Endothelial cell of umbilical vein (primary cell): ENCODE measurements at regions of chr22 and their contacts with region 1.

Region 1: DNA sequence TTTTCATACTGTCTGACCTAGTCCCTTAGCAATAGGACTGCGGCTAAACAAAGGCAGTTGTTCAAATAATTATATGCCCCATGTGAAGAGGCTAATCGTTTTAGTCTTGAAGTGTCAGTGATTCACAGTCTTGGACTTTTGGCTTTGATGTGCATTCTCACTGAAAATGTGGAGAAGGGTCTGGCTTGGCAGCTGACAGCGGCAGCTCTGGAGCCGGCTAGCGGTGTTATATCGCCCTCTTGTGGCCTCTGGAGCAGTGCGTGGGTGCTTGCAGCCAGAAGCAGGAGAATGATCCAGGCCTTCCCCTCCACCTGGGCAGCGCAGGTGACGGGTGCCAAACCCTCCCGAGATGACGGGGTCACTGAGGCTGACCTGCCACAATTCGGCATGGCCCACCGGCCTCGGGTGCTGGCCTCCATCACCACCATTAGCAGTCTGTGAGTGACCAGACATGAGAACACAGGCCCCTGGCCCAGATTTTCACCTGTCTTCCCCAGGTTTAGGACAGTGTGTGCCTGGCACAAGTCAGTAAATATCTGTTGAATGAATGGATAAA is 90.3 kb upstream of the PITPNB start:
- DNase-seq: peak; percentile 75
- H3K4me3 ChIP-seq: no peak overlapping the region
- H3K27ac ChIP-seq: no peak overlapping the region
- H3K4me1 ChIP-seq: no peaks in the 10 kb centered on the region
- H3K27me3 ChIP-seq: no peaks in the 10 kb centered on the region
- CTCF ChIP-seq: peak; percentile 95 to 99
- POLR2A ChIP-seq: no peak

Region 2: GRCh38 chr22:26756675-26757293 is 1252.6 kb before region 1 on chr22:
- CTCF ChIA-PET with region 1: interaction called, 3 read pairs
- POLR2A ChIA-PET with region 1: no interaction called
- dilution Hi-C with region 1: no loop called
- intact Hi-C with region 1: loop called (anchors 2 kb)
- DNase-seq: peak; percentile 46
- H3K4me3 ChIP-seq: peak overlapping the region in 2 of 3 experiments; percentile 13 to 29
- H3K27ac ChIP-seq: no peak overlapping the region
- H3K4me1 ChIP-seq: peaks cover 5% of the 10 kb centered on the region
- H3K27me3 ChIP-seq: no peaks in the 10 kb centered on the region
- CTCF ChIP-seq: peak; percentile 75 to 88
- POLR2A ChIP-seq: no peak

Region 3: GRCh38 chr22:27405672-27406388 is 603.5 kb before region 1 on chr22:
- CTCF ChIA-PET with region 1: no interaction called
- POLR2A ChIA-PET with region 1: no interaction called
- dilution Hi-C with region 1: no loop called
- intact Hi-C with region 1: loop called (anchors 10 kb)
- DNase-seq: peak; percentile 43
- H3K4me3 ChIP-seq: no peak overlapping the region
- H3K27ac ChIP-seq: no peak overlapping the region
- H3K4me1 ChIP-seq: no peaks in the 10 kb centered on the region
- H3K27me3 ChIP-seq: peaks cover 0 to under 1% of the 10 kb centered on the region in 2 experiments
- CTCF ChIP-seq: peak; percentile 81 to 85
- POLR2A ChIP-seq: no peak

Region 4: DNA sequence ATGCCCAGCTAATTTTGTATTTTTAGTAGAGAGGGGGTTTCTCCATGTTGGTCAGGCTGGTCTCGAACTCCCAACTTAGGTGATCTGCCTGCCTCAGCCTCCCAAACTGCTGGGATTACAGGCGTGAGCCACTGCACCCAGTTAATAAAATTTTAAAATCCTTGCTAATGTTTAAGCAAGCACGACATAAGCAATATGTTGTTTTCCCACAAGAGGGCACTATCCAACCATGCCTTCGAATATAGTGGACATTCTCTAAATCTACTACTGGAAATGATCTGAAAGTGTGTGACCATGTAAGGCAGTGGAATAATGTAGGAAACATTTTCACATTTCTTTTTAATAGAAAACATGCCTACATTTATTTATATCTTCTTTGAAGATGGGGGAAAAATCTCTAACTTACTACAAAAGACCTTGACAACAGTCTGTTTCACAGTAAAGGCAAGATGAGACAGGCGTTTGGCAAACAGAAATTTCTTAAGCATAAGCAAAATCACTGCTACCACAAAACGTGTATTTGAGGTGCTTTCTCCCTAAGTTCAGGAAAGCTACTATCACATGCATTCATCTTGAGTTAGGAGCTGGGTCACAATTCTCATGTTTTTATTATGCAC is 128.5 kb before region 1 on chr22:
- CTCF ChIA-PET with region 1: interaction called, 68 read pairs
- POLR2A ChIA-PET with region 1: no interaction called
- dilution Hi-C with region 1: no loop called
- intact Hi-C with region 1: loop called (anchors 1 kb)
- DNase-seq: peak; percentile 85
- H3K4me3 ChIP-seq: no peak overlapping the region
- H3K27ac ChIP-seq: peak overlapping the region; percentile 22
- H3K4me1 ChIP-seq: peaks cover 15% of the 10 kb centered on the region
- H3K27me3 ChIP-seq: no peaks in the 10 kb centered on the region
- CTCF ChIP-seq: peak; percentile 52 to 54
- POLR2A ChIP-seq: no peak

Region 5: DNA sequence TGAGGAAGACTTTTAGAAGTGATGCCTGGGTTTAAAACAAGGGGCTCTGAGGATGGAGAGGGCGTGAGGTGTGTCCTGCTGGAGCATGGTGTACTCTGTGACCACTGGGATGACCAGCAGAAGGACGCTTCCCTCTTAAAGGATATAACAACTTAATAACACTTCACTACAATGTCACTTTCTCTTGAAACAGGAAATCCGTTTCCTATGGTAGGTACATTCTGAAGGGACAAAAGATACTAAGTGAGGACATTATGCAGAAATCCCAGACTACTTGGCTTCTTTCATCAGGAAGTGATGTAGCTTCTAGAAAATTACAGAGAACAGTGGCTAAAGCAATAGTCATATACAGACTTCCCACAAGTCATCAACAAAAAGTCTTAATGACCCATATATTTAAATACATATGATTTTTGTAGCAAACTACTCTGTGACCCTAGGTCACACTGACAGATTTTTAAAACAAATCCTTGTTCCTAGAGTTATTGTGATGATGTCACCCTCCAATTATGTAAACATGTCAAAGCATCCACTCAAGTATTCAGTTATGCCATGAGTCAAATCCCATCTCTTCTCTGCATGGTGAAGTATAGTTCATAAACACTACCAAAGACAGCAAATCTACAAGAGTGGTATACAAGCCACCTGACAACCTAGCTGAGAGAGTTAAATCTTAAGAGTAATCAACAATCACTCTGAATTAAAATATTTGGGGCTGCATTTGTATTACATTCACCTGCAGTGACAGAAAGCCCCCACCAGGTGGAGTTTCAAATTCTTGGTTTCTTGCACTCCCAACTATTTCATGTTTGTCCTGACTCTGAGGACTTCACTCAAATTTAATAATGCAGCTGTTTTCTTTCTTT is 123.1 kb before region 1 on chr22:
- CTCF ChIA-PET with region 1: interaction called, 68 read pairs
- POLR2A ChIA-PET with region 1: no interaction called
- dilution Hi-C with region 1: no loop called
- intact Hi-C with region 1: loop called (anchors 1 kb)
- DNase-seq: peak; percentile 85
- H3K4me3 ChIP-seq: peak overlapping the region in 1 of 3 experiments; percentile 1
- H3K27ac ChIP-seq: peak overlapping the region; percentile 81
- H3K4me1 ChIP-seq: peaks cover 50% of the 10 kb centered on the region
- H3K27me3 ChIP-seq: no peaks in the 10 kb centered on the region
- CTCF ChIP-seq: peak; percentile 63 to 65
- POLR2A ChIP-seq: no peak

Region 6: GRCh38 chr22:27919222-27919941 is 90.0 kb before region 1 on chr22 and contains the start of gene PITPNB:
- CTCF ChIA-PET with region 1: interaction called, 10 read pairs
- POLR2A ChIA-PET with region 1: no interaction called
- dilution Hi-C with region 1: no loop called
- intact Hi-C with region 1: loop called (anchors 1 kb)
- DNase-seq: peak; percentile 99
- H3K4me3 ChIP-seq: peak within 1 kb of the TSS; percentile 77 to 100 (median 88)
- H3K27ac ChIP-seq: peak within 1 kb of the TSS; percentile 98
- H3K4me1 ChIP-seq: peaks cover 41% of the 10 kb centered on the region
- H3K27me3 ChIP-seq: no peaks in the 10 kb centered on the region
- CTCF ChIP-seq: no peak
- POLR2A ChIP-seq: peak; percentile 88
- total RNA-seq, gene PITPNB: 108 and 109 TPM in 2 replicates

Region 7: DNA sequence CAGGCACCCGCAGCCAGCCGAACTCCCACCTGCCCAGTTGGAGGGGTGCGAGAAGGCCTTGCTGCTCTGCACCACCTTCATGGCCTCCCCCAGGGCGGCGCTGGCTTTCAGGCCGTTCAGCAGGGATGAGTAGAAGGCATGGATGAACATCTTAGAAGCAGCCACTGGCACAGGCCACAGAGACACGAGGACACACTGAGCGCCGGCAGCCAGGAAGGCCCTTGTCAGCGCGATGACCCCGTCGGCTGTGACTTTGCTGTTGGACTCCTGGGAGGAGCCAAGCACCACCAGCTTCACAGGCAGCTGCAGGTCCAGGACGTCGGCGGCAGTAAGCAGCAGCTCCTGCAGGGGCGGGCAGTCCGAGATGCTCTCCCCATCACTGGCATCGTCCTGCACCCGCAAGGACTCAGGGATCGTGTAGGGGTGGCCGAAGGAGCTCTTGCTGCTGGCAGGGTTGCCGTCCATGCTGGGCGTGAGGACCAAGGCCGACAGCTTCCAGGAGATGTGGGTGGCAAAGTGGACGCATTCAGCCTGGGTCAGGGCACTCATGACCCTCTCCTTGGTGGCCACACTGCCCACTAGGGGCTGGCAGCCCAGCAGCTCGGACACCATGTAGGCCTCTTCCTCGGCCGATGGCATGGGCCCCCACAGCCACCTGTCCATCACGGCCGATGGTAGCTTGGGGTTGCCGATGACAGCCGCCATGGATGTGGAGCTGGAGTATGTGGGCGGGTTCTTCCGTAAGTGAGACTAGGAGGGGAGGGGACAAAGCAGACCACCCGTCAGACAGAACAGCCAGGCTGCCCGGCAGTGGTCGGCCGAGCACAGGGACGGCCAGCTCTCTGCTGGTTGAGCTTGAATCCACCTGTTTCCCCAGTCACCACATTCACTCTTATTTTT is 10.6 kb before region 1 on chr22:
- CTCF ChIA-PET with region 1: interaction called, 11 read pairs
- POLR2A ChIA-PET with region 1: no interaction called
- dilution Hi-C with region 1: no loop called
- intact Hi-C with region 1: no loop called
- DNase-seq: no peak
- H3K4me3 ChIP-seq: no peak overlapping the region
- H3K27ac ChIP-seq: no peak overlapping the region
- H3K4me1 ChIP-seq: no peaks in the 10 kb centered on the region
- H3K27me3 ChIP-seq: no peaks in the 10 kb centered on the region
- CTCF ChIP-seq: no peak
- POLR2A ChIP-seq: no peak

Region 8: DNA sequence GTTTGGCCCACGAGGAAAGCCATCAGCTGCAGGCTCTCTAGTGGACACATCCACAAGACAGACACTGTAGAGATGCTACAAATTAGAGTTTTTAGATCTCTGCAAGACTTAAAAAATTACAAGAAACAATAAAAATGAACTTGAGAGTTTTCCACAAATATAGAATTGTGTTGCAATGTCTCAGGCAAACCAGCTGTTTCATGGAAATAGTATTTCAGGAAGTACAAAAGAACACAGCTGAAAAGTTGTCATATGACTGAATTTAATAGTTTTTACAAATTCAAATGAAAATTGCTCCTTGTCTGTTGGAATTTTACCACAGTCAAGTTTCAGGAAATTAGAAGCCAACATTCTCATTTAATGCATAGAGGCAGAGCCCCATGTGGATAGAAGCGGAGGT is 94.2 kb after region 1 on chr22:
- CTCF ChIA-PET with region 1: no interaction called
- POLR2A ChIA-PET with region 1: no interaction called
- dilution Hi-C with region 1: no loop called
- intact Hi-C with region 1: no loop called
- DNase-seq: no peak
- H3K4me3 ChIP-seq: no peak overlapping the region
- H3K27ac ChIP-seq: no peak overlapping the region
- H3K4me1 ChIP-seq: no peaks in the 10 kb centered on the region
- H3K27me3 ChIP-seq: no peaks in the 10 kb centered on the region
- CTCF ChIP-seq: no peak
- POLR2A ChIP-seq: no peak